K562 (cell line): ENCODE measurements at regions of chr6 and their contacts with region 1.

Region 1: GRCh38 chr6:139355172-139355571 is 19.3 kb downstream of the CITED2 start:
- DNase-seq: no peak
- ATAC-seq: no peak
- H3K4me3 ChIP-seq: no peak overlapping the region
- H3K27ac ChIP-seq: no peak overlapping the region
- H3K4me1 ChIP-seq: no peaks in the 10 kb centered on the region
- H3K27me3 ChIP-seq: peaks cover 4 to 16% of the 10 kb centered on the region in 2 experiments; a peak in 4 of 5 replicates
- CTCF ChIP-seq: no peak
- EP300 ChIP-seq: no peak
- POLR2A ChIP-seq: no peak
- RAD21 ChIP-seq: no peak

Region 2: DNA sequence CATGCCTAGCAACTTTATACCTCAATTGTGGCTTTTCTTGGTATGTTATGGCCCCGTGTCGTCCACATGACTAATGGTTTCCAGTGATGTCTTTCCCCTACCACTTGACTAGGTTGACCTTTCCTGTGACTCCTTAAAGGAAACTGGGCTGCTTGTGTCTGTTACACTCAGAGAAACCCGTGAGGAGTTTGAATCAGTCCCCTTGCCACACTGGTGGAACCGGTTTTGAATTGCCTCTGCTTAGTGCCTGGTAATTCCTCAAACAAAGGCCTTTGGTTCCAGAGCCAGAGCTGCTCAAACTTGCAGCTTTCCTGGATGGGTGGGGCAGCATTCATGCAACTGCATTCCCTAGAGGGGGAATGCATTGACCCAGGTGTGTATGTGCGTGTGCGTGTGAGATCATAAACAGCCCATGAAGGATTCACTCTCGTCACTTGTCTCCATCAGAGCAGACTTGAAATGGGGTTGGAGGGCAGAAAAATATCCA is 537.3 kb before region 1 on chr6:
- CTCF ChIA-PET with region 1: no interaction called
- POLR2A ChIA-PET with region 1: no interaction called
- in situ Hi-C with region 1: loop called (anchors 5 kb)
- intact Hi-C with region 1: no loop called
- DNase-seq: peak in 1 of 4 experiments; percentile 11
- ATAC-seq: no peak
- H3K4me3 ChIP-seq: no peak overlapping the region
- H3K27ac ChIP-seq: no peak overlapping the region
- H3K4me1 ChIP-seq: no peaks in the 10 kb centered on the region
- H3K27me3 ChIP-seq: peaks cover 33 to 37% of the 10 kb centered on the region in 2 experiments
- CTCF ChIP-seq: no peak
- EP300 ChIP-seq: no peak
- POLR2A ChIP-seq: no peak
- RAD21 ChIP-seq: no peak

Region 3: DNA sequence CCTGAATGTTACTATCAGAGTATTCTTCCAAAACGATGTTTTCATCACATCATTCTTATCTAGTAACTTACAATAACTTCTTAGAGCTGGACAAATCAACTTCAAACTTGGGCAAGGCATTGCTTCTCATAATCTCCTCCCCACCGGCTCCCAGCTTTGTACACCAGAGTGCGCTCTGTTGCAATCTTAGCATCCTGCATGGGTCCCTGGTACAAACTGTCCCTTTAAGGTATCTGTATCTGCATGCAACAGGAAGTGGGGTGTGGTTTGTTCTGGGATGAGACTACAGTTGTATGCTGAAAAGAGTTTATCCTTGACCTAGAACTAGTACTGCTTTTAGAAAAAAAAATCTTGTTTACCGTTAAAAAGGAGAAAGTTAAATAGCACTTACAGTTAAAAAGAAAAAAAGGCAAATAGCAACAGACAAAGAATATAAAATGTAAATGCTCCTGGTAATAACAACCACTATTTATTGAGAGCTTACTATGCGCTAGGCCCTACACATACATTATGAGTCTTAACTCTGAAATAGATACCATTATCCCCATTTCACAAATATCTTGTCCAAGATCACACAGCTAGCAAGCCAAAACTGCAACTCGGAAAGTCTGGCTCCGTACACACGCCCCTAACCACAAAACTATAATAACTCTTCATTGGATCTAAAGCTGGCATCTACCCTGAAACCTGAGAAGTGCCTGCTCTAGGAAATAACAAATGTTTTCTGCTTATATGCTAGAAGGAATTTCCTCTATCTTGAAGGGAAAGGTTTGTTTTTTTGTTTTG is 230.1 kb before region 1 on chr6:
- CTCF ChIA-PET with region 1: no interaction called
- POLR2A ChIA-PET with region 1: no interaction called
- in situ Hi-C with region 1: loop called (anchors 10 kb)
- intact Hi-C with region 1: no loop called
- DNase-seq: peak; percentile 32 to 64 (median 48)
- ATAC-seq: peak; percentile 98
- H3K4me3 ChIP-seq: no peak overlapping the region
- H3K27ac ChIP-seq: no peak overlapping the region
- H3K4me1 ChIP-seq: no peaks in the 10 kb centered on the region; a peak in 1 of 5 replicates
- H3K27me3 ChIP-seq: peaks cover 4 to 5% of the 10 kb centered on the region in 2 experiments; a peak in 3 of 5 replicates
- CTCF ChIP-seq: peak; percentile 60 to 65 (median 65)
- EP300 ChIP-seq: no peak
- POLR2A ChIP-seq: no peak
- RAD21 ChIP-seq: peak; percentile 92 to 96